ENCODE measurements at regions of chr1 and their contacts with region 1.

Region 1: GRCh38 chr1:10510520-10511493 is 36.1 kb downstream of the PEX14 start:
- DNase-seq: peak; percentile 80
- H3K4me3 Mint-ChIP-seq: peak overlapping the region; percentile 67
- H3K27ac Mint-ChIP-seq: peak overlapping the region; percentile 90
- H3K4me1 Mint-ChIP-seq: peaks cover 79% of the 10 kb centered on the region
- H3K27me3 Mint-ChIP-seq: no peaks in the 10 kb centered on the region

Region 2: DNA sequence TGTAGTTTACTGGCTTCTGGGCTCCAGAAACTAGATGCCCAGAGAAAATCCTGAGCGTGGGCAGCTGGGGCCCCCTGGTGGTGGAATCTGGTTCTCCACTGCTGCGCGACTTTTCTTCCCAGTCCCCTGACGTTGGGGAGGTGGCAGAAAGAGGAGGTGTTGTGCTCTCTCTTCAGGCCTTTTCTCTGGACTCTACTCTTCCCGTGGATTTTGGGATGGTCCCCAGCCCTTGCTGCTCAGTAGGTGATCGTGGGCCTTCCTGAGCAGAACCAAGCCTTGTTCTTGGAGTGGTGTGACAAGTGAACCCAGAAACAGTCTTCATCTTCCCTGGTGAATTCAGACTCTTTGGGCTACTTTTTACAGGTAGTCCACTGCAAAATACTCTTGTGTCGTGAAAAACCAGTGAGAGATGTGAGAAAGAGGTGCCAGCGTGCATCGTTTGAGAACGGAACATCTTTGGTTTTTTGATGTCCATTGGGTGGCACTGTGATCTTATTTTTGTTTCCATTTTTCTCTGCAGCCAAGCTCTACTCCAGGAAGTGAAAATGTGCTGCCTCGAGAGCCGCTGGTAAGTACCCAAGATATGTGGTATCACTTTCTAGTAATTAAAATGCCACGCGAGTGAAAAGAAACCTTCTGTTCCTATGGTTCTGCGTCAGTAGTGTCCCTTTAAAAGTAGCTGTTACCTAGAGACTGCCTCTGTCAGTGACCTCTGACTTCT is 15.9 kb before region 1 on chr1:
- intact Hi-C with region 1: loop called (anchors 1 kb)
- DNase-seq: peak; percentile 73
- H3K4me3 Mint-ChIP-seq: peak overlapping the region; percentile 77
- H3K27ac Mint-ChIP-seq: peak overlapping the region; percentile 91
- H3K4me1 Mint-ChIP-seq: peaks cover 50% of the 10 kb centered on the region
- H3K27me3 Mint-ChIP-seq: no peaks in the 10 kb centered on the region

Region 3: DNA sequence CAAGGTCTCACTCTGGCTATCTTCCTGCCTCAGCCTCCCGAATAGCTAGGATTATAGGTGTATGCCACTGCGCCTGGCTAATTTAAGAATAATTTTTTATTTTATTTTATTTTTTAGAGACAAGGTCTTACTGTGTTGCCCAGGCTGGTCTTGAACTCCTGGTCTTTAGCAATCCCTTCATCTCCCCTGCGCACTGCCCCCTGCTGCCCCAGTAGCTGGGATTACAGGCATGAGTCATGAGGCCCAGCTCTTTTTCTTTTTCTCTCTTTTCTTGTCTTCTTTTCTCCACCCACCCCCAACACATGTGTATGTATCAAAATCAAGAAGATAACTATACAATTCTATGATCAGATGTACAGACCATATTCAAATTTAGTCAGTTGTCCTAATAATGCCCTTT is 51.1 kb after region 1 on chr1:
- intact Hi-C with region 1: loop called (anchors 10 kb)
- DNase-seq: no peak
- H3K4me3 Mint-ChIP-seq: no peak overlapping the region
- H3K27ac Mint-ChIP-seq: no peak overlapping the region
- H3K4me1 Mint-ChIP-seq: peaks cover 2% of the 10 kb centered on the region
- H3K27me3 Mint-ChIP-seq: no peaks in the 10 kb centered on the region

Region 4: GRCh38 chr1:10646347-10646861 is 135.6 kb after region 1 on chr1:
- intact Hi-C with region 1: no loop called
- DNase-seq: no peak
- H3K4me3 Mint-ChIP-seq: no peak overlapping the region
- H3K27ac Mint-ChIP-seq: no peak overlapping the region
- H3K4me1 Mint-ChIP-seq: no peaks in the 10 kb centered on the region
- H3K27me3 Mint-ChIP-seq: no peaks in the 10 kb centered on the region

Region 5: GRCh38 chr1:10694633-10695627 is 184.1 kb after region 1 on chr1:
- intact Hi-C with region 1: loop called (anchors 5 kb)
- DNase-seq: peak; percentile 76
- H3K4me3 Mint-ChIP-seq: peak overlapping the region; percentile 71
- H3K27ac Mint-ChIP-seq: no peak overlapping the region
- H3K4me1 Mint-ChIP-seq: peaks cover 31% of the 10 kb centered on the region
- H3K27me3 Mint-ChIP-seq: peaks cover 15% of the 10 kb centered on the region

Region 6: GRCh38 chr1:10796019-10796944 is 285.5 kb after region 1 on chr1 and contains the start of gene CASZ1:
- intact Hi-C with region 1: loop called (anchors 10 kb)
- DNase-seq: no peak
- H3K4me3 Mint-ChIP-seq: peak within 1 kb of the TSS; percentile 75
- H3K27ac Mint-ChIP-seq: no peak within 1 kb of the TSS
- H3K4me1 Mint-ChIP-seq: peaks cover 9% of the 10 kb centered on the region
- H3K27me3 Mint-ChIP-seq: peaks cover 66% of the 10 kb centered on the region
- total RNA-seq, gene CASZ1: 8.6 and 9.9 TPM in 2 replicates

Region 7: DNA sequence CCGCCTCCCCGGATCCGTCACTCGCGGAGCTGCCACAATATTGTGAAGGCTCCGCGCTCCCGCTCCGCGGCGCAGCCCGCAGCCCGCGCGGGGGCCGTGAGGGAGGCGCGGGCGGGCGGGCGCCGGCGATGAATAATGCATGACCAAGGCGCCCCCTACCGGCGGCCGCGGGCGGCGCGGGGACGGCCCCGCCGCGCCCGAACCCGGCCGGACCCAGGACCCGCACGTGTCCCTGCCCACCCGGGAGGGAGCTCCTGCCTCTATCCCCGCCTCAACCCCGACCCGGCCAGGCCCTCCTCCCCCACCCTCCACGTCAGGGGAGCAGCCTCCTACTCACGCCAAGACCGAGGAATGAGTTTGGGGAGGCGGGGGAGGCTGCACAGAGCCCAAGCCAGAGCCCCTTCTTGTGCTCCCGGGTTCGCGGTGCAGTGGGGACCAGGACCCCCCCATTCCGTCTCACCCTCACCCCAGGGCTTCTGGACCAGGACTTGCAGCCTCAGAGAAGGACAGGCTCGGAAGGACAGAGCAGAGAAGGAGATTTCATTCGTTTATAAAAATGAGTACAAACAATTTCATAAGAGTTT is 356.4 kb after region 1 on chr1:
- intact Hi-C with region 1: loop called (anchors 2 kb)
- DNase-seq: peak; percentile 50
- H3K4me3 Mint-ChIP-seq: peak overlapping the region; percentile 52
- H3K27ac Mint-ChIP-seq: no peak overlapping the region
- H3K4me1 Mint-ChIP-seq: peaks cover 15% of the 10 kb centered on the region
- H3K27me3 Mint-ChIP-seq: peaks cover 69% of the 10 kb centered on the region

Region 8: DNA sequence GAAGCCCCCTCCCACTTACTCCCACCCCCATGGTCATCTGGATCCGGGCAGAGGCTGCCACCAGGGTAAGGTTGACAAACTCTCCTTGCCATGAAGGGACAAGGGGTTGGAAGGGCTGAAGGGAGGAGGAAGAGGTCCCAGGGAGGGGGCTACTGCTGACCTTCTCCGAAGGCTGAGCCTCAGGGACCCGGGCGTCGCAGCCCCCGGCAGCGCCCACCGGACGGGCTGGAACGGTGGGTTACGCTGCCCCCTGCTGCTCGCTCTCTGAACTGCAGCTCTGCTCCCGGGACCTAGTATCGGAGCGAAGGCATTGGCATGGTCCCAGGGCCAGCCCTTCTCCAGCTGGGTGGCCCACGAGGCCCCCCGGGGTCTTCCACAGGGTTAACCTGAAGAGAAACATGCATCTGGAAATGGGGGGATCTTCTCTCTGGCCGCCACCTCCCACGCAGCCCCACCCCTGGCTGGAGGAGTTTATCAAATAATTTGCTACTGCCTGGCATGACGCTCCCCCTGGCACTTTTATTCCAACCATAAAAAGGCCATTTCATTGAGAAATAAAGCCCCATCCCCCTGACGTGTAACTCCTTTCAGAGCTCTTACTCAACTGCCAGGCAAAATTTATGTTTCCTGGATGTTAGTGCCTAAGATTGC is 431.2 kb after region 1 on chr1:
- intact Hi-C with region 1: loop called (anchors 5 kb)
- DNase-seq: peak; percentile 40
- H3K4me3 Mint-ChIP-seq: no peak overlapping the region
- H3K27ac Mint-ChIP-seq: no peak overlapping the region
- H3K4me1 Mint-ChIP-seq: peaks cover 27% of the 10 kb centered on the region
- H3K27me3 Mint-ChIP-seq: peaks cover 62% of the 10 kb centered on the region